Endothelial cell of umbilical vein (primary cell): ENCODE measurements at regions of chr17 and their contacts with region 1.

Region 1: GRCh38 chr17:37239690-37240334 is 136.0 kb upstream of the C17orf78 start:
- DNase-seq: peak; percentile 62
- H3K4me3 ChIP-seq: no peak overlapping the region
- H3K27ac ChIP-seq: no peak overlapping the region
- H3K4me1 ChIP-seq: no peaks in the 10 kb centered on the region
- H3K27me3 ChIP-seq: no peaks in the 10 kb centered on the region
- CTCF ChIP-seq: peak; percentile 46 to 52
- POLR2A ChIP-seq: no peak

Region 2: GRCh38 chr17:36629252-36629847 is 610.5 kb before region 1 on chr17:
- CTCF ChIA-PET with region 1: interaction called, 85 read pairs
- POLR2A ChIA-PET with region 1: no interaction called
- dilution Hi-C with region 1: no loop called
- intact Hi-C with region 1: loop called (anchors 1 kb)
- DNase-seq: peak; percentile 69
- H3K4me3 ChIP-seq: no peak overlapping the region
- H3K27ac ChIP-seq: no peak overlapping the region
- H3K4me1 ChIP-seq: no peaks in the 10 kb centered on the region
- H3K27me3 ChIP-seq: peaks cover 20 to 24% of the 10 kb centered on the region in 2 experiments
- CTCF ChIP-seq: peak; percentile 92 to 97
- POLR2A ChIP-seq: no peak

Region 3: DNA sequence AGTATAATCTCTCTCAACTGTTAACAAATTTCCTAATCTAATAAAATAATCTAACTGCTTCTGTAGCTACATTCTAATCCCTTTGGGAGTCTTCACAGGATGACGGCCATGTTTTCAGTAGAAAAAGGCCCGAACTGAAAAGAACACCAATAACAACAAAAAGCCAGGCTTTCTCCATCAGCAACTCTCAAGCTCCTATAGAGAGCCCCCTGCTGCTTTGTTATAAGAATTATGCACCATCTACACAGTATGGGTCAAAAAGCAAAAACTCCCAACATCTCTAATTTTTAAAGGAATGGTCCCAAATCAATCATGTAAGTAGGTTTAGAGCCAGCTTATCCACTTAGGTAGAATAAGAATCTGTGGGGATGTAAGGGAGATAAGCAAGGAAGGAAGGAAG is 27.6 kb before region 1 on chr17:
- CTCF ChIA-PET with region 1: interaction called, 12 read pairs
- POLR2A ChIA-PET with region 1: no interaction called
- dilution Hi-C with region 1: no loop called
- intact Hi-C with region 1: no loop called
- DNase-seq: peak; percentile 13
- H3K4me3 ChIP-seq: no peak overlapping the region
- H3K27ac ChIP-seq: no peak overlapping the region
- H3K4me1 ChIP-seq: no peaks in the 10 kb centered on the region
- H3K27me3 ChIP-seq: no peaks in the 10 kb centered on the region
- CTCF ChIP-seq: peak; percentile 3 to 34
- POLR2A ChIP-seq: no peak

Region 4: GRCh38 chr17:37259030-37259735 is 19.4 kb after region 1 on chr17:
- CTCF ChIA-PET with region 1: interaction called, 14 read pairs
- POLR2A ChIA-PET with region 1: no interaction called
- dilution Hi-C with region 1: no loop called
- intact Hi-C with region 1: no loop called
- DNase-seq: peak; percentile 7
- H3K4me3 ChIP-seq: no peak overlapping the region
- H3K27ac ChIP-seq: no peak overlapping the region
- H3K4me1 ChIP-seq: peaks cover 11% of the 10 kb centered on the region
- H3K27me3 ChIP-seq: no peaks in the 10 kb centered on the region
- CTCF ChIP-seq: no peak
- POLR2A ChIP-seq: no peak

Region 5: GRCh38 chr17:37299257-37299980 is 59.6 kb after region 1 on chr17:
- CTCF ChIA-PET with region 1: interaction called, 11 read pairs
- POLR2A ChIA-PET with region 1: no interaction called
- dilution Hi-C with region 1: no loop called
- intact Hi-C with region 1: no loop called
- DNase-seq: peak; percentile 66
- H3K4me3 ChIP-seq: peak overlapping the region in 1 of 3 experiments; percentile 8
- H3K27ac ChIP-seq: peak overlapping the region; percentile 47
- H3K4me1 ChIP-seq: peaks cover 29% of the 10 kb centered on the region
- H3K27me3 ChIP-seq: no peaks in the 10 kb centered on the region
- CTCF ChIP-seq: no peak
- POLR2A ChIP-seq: no peak

Region 6: DNA sequence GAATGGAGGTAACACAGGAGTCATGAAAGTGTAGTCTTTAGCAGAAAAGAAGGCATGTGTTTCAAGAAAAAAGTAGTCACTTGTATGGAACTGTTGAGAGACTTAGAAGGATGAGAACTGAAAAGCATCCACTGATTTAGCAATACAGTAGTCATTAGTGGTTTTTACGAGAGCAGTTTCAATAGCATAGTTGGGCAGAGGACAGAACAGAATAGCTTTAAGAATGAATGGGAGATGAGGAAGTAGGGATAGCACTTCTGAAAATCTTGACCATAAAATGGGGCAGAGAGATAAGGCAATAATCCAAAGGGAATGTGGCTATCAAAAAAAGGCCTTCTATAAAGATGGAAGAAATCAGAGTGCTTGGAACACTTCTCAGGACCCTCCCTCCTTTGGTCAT is 71.1 kb after region 1 on chr17:
- CTCF ChIA-PET with region 1: no interaction called
- POLR2A ChIA-PET with region 1: no interaction called
- dilution Hi-C with region 1: no loop called
- intact Hi-C with region 1: no loop called
- DNase-seq: no peak
- H3K4me3 ChIP-seq: no peak overlapping the region
- H3K27ac ChIP-seq: no peak overlapping the region
- H3K4me1 ChIP-seq: peaks cover 2% of the 10 kb centered on the region
- H3K27me3 ChIP-seq: no peaks in the 10 kb centered on the region
- CTCF ChIP-seq: no peak
- POLR2A ChIP-seq: no peak